A549 (cell line): ENCODE measurements at regions of chr13 and their contacts with region 1.

Region 1: GRCh38 chr13:30114571-30115256 is 192.6 kb downstream of the KATNAL1 start:
- DNase-seq: peak; percentile 60 to 80
- ATAC-seq: peak; percentile 88 to 91
- H3K4me3 ChIP-seq: peak overlapping the region; percentile 65
- H3K27ac ChIP-seq: peak overlapping the region; percentile 87 to 99
- H3K4me1 ChIP-seq: peaks cover 13% of the 10 kb centered on the region
- CTCF ChIP-seq: peak; percentile 71
- EP300 ChIP-seq: no peak
- POLR2A ChIP-seq: peak; percentile 66
- RAD21 ChIP-seq: peak; percentile 74 to 84

Region 2: DNA sequence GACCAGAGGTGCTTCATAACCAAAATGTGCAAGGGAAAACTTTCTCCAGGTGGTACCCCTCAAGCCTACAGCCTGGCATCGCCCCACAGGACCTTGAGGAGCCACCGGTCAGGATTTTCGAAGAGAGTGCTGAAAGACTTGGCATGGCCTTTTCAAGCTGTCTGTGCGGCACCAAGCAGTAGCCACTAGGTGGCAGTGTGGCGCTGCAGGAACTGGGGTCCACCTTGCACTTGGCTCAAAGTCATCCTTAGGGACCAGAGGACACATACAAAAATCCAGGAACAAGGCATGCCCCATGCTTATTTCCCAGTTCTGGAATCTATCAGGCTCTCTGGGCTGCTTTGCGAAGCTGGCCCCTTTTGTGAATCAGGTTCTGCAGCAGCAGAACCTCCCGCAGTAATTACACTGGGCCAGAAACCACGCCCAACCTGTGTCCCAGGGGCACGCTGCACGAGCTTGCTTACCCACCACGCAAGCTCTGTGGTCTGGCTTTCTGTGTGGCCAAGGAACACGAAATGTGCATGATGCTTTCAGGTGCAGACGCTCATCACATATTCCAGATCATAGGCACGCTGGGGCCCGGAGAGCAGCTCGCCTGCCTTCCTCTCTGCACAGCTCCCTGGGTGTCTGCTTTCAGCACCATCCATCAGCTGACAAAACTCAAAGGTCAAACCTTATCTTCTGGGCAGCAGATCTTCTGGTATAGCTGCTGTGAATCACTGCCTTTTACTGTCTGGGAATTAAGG is 606.4 kb before region 1 on chr13:
- CTCF ChIA-PET with region 1: interaction called, 28 read pairs
- POLR2A ChIA-PET with region 1: no interaction called
- DNase-seq: peak; percentile 69 to 70
- ATAC-seq: peak; percentile 80 to 91
- H3K4me3 ChIP-seq: no peak overlapping the region
- H3K27ac ChIP-seq: no peak overlapping the region
- H3K4me1 ChIP-seq: peaks cover 5% of the 10 kb centered on the region; the same call in 1 of the 3 replicates
- CTCF ChIP-seq: peak; percentile 72
- EP300 ChIP-seq: no peak
- POLR2A ChIP-seq: no peak
- RAD21 ChIP-seq: peak; percentile 71 to 76

Region 3: DNA sequence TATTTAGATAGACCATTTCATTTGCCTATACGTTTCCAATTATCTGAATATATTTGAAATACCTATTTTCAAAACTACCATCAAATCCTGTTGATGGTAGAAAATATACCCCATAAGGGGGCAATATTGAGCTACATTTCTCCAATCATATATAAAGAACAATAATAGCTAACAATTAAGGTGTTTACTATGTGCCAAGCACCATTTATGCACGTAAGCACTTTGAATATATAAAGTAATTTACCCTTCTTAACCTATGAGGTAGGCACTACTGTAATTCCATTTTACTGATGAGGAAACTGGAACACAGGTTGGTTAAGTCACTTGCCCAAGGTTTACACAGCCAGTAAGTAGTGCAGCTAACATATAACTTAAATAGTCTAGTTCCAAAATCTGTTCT is 343.5 kb before region 1 on chr13:
- CTCF ChIA-PET with region 1: interaction called, 131 read pairs
- POLR2A ChIA-PET with region 1: interaction called, 5 read pairs
- DNase-seq: peak in 1 of 2 experiments; percentile 36
- ATAC-seq: peak in 1 of 2 experiments; percentile 56; a peak in 2 of 6 replicates
- H3K4me3 ChIP-seq: no peak overlapping the region
- H3K27ac ChIP-seq: no peak overlapping the region
- H3K4me1 ChIP-seq: peaks cover 3% of the 10 kb centered on the region; the same call in 1 of the 3 replicates
- CTCF ChIP-seq: peak; percentile 60
- EP300 ChIP-seq: no peak
- POLR2A ChIP-seq: no peak
- RAD21 ChIP-seq: peak; percentile 72 to 75

Region 4: GRCh38 chr13:29850224-29850898 is 264.4 kb before region 1 on chr13 and contains the start of gene UBL3:
- CTCF ChIA-PET with region 1: interaction called, 110 read pairs
- POLR2A ChIA-PET with region 1: interaction called, 4 read pairs
- DNase-seq: peak; percentile 87 to 94
- ATAC-seq: peak; percentile 89
- H3K4me3 ChIP-seq: peak within 1 kb of the TSS; percentile 65
- H3K27ac ChIP-seq: peak within 1 kb of the TSS; percentile 91 to 97
- H3K4me1 ChIP-seq: peaks cover 37% of the 10 kb centered on the region
- CTCF ChIP-seq: no peak
- EP300 ChIP-seq: no peak
- POLR2A ChIP-seq: peak; percentile 55
- RAD21 ChIP-seq: no peak
- polyA plus RNA-seq, gene UBL3: 13.5 and 17.1 TPM in 2 replicates

Region 5: DNA sequence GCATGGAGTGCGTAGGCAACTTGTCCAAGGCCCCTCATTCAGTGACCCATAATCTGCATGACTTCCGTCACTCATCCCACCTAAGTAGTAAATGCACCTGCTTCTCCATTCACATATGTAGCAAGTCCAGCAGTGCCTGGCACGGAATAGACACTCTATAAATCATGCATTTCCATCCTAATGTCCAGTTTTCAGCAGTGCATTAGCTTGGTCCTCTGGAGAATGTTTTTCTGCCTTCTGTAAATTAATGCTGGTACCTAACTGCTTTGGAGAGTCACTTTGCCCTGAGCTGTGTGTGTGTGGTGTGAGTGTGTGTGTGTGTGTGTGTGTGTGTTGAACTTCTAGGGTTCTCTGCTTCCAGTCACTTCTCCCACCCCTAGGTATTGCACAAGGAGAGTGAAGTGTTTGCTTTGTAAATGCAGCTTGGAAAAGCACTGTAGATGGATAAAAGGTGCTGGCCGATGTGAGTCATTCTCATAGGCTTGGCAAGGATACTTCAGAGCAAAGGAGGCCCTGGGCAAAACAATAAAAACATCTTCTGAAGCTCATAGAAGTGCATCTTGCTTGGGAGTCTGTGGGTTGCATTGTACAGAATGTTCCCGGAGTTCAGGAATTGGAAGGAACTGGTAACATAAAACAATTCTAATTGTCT is 10.8 kb after region 1 on chr13:
- CTCF ChIA-PET with region 1: interaction called, 49 read pairs
- POLR2A ChIA-PET with region 1: no interaction called
- DNase-seq: peak; percentile 31 to 82
- ATAC-seq: peak; percentile 90 to 91
- H3K4me3 ChIP-seq: no peak overlapping the region
- H3K27ac ChIP-seq: peak overlapping the region; percentile 39 to 72; a peak in 3 of 6 replicates
- H3K4me1 ChIP-seq: peaks cover 17% of the 10 kb centered on the region
- CTCF ChIP-seq: no peak
- EP300 ChIP-seq: peak in 1 of 2 experiments; percentile 26; a peak in 1 of 5 replicates
- POLR2A ChIP-seq: no peak
- RAD21 ChIP-seq: no peak

Region 6: DNA sequence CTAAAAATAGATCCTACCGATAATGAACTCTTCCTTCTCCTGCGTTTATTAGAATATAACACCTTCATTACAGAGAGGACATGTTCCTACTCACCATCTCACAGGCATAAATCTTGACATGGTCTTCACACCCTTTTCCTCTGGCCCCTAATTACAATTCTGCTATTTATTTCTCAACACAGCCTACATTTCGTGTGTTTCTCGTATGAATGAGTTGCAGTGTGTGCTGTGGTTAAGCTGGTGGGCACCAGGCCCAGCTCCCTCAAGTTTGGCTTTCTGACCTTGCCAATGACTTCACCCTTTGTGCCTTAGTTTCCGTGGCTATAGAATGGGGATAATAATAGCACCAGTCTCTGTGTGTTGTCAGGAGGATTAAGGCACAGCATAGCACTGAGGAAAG is 204.9 kb after region 1 on chr13:
- CTCF ChIA-PET with region 1: no interaction called
- POLR2A ChIA-PET with region 1: no interaction called
- DNase-seq: no peak
- ATAC-seq: no peak
- H3K4me3 ChIP-seq: no peak overlapping the region
- H3K27ac ChIP-seq: no peak overlapping the region
- H3K4me1 ChIP-seq: no peaks in the 10 kb centered on the region
- CTCF ChIP-seq: no peak
- EP300 ChIP-seq: no peak
- POLR2A ChIP-seq: no peak
- RAD21 ChIP-seq: no peak